ENCODE measurements at regions of chr5 and their contacts with region 1.

Region 1: DNA sequence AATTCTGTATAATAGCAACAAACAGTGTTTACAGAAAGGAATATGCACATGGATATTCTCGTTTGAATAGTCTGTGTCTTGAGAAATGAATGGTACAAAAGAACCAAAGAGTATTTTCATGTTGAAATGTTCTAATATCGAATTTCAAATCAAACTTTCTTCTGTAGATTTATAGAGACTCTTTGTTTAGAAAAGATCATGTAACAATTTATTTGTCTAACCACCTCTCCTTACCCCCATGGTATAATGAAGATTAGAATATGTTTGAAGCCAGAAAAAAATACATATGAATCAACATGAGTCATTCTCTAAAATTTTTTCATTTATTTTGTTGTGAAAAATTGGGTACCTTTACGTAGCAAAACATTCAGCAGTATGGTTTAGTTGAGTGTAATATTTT is 285.6 kb downstream of the PRR16 start:
- DNase-seq: no peak
- H3K4me3 ChIP-seq: no peak overlapping the region
- H3K27ac ChIP-seq: no peak overlapping the region
- H3K4me1 ChIP-seq: no peaks in the 10 kb centered on the region
- H3K27me3 ChIP-seq: no peaks in the 10 kb centered on the region
- CTCF ChIP-seq: no peak

Region 2: DNA sequence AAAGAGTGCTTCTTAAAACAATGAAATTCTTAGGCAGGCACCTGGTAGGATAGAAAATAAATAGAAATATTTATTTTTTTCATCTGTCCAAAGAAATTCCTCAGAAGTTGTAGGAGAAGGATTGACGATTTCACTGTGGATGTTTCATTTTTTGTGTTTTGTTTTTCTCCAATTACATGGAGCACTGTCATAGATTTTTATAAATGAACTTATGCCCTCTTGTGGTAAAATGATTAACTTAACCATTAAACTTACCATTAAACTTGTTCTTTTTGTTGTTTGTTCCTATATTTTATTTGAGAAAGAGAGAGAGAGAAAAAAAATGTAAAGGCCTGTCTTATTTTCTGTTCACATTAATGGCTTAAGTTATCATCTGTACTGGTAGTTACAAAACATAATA is 53.5 kb after region 1 on chr5:
- CTCF ChIA-PET with region 1: no interaction called
- POLR2A ChIA-PET with region 1: no interaction called
- intact Hi-C with region 1: no loop called
- DNase-seq: no peak
- H3K4me3 ChIP-seq: peak overlapping the region; percentile 5; the same call in 1 of the 2 replicates
- H3K27ac ChIP-seq: no peak overlapping the region
- H3K4me1 ChIP-seq: no peaks in the 10 kb centered on the region
- H3K27me3 ChIP-seq: no peaks in the 10 kb centered on the region
- CTCF ChIP-seq: peak; percentile 65

Region 3: DNA sequence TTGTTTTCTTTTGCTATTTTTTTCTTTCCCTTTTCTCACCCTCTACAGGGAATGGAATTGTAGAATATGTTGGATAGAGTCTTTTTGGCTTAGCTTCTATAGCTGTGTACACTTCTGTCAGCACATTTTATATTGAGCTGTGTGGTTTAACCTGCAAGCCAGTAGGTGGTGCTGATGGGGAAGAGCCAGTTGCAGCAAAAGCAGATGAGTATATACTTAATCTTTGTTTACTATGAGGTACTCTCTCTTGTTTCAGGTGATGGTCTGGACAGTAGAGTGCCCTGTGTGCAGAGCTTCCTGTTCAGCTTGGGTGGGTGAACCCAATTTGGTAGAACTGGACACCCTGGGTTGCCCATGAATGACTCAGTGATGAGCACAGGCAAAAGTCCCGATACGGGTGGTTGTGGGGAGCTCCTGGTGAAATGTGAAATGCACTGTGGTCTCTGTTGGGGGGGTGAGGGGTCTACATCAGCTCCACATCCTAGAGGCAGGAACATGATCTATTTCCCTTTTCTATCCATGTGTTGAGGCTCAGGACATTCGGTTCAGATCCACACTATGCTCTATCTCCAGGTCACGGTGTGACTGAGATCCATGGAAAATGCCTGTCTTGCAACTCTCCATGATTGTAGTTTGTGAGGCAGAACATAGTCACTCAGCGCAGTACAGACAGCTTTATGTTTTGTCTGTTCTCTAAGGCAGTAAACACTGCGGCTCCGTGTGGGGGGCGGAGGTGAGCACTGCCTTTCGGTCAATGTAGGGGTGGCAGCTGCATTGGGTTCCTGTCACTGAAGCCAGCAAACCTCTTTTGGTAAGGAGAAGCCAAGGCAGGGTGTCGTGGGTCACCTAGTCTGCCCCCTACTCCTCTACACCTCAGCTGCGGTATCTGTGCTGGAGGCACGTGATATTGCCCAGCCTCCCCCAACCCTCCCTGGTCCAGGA is 67.6 kb after region 1 on chr5:
- CTCF ChIA-PET with region 1: no interaction called
- POLR2A ChIA-PET with region 1: no interaction called
- intact Hi-C with region 1: no loop called
- DNase-seq: no peak
- H3K4me3 ChIP-seq: no peak overlapping the region
- H3K27ac ChIP-seq: no peak overlapping the region
- H3K4me1 ChIP-seq: no peaks in the 10 kb centered on the region
- H3K27me3 ChIP-seq: no peaks in the 10 kb centered on the region
- CTCF ChIP-seq: peak; percentile 67

Region 4: GRCh38 chr5:120848883-120849282 is 99.1 kb after region 1 on chr5:
- CTCF ChIA-PET with region 1: no interaction called
- POLR2A ChIA-PET with region 1: no interaction called
- intact Hi-C with region 1: no loop called
- DNase-seq: no peak
- H3K4me3 ChIP-seq: no peak overlapping the region
- H3K27ac ChIP-seq: no peak overlapping the region
- H3K4me1 ChIP-seq: no peaks in the 10 kb centered on the region
- H3K27me3 ChIP-seq: no peaks in the 10 kb centered on the region
- CTCF ChIP-seq: no peak

Region 5: GRCh38 chr5:120974690-120975089 is 225.0 kb after region 1 on chr5:
- CTCF ChIA-PET with region 1: no interaction called
- POLR2A ChIA-PET with region 1: no interaction called
- intact Hi-C with region 1: no loop called
- DNase-seq: no peak
- H3K4me3 ChIP-seq: no peak overlapping the region
- H3K27ac ChIP-seq: no peak overlapping the region
- H3K4me1 ChIP-seq: no peaks in the 10 kb centered on the region
- H3K27me3 ChIP-seq: no peaks in the 10 kb centered on the region
- CTCF ChIP-seq: no peak

Region 6: DNA sequence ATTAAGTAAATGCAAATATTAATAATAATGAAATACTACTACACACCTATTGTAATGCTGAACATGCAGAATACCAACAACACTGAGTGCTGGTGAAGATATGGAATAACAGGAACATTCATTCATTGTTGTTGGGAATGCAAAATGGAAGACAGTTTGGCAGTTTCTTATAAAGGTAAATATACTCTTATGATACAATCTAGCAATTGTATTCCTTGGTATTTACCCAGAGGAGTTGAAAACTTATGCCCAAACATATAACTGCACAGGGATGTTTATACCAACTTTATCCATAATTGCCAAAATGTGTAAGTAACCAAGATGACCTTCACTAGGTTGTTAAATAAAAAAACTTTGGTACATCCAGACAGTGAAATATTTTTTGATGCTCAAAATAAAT is 351.2 kb after region 1 on chr5:
- CTCF ChIA-PET with region 1: no interaction called
- POLR2A ChIA-PET with region 1: interaction called, 12 read pairs
- intact Hi-C with region 1: no loop called
- DNase-seq: no peak
- H3K4me3 ChIP-seq: no peak overlapping the region
- H3K27ac ChIP-seq: no peak overlapping the region
- H3K4me1 ChIP-seq: no peaks in the 10 kb centered on the region
- H3K27me3 ChIP-seq: no peaks in the 10 kb centered on the region
- CTCF ChIP-seq: no peak